MCF 10A (cell line): ENCODE measurements at regions of chr11 and their contacts with region 1.

Region 1: GRCh38 chr11:95790123-95790932 is at the start of gene CEP57:
- DNase-seq: peak; percentile 99
- H3K4me3 Mint-ChIP-seq: peak within 1 kb of the TSS; percentile 97
- H3K27ac Mint-ChIP-seq: peak within 1 kb of the TSS; percentile 100
- H3K4me1 Mint-ChIP-seq: peaks cover 17% of the 10 kb centered on the region
- H3K27me3 Mint-ChIP-seq: no peaks in the 10 kb centered on the region
- CTCF ChIP-seq: no peak
- total RNA-seq, gene CEP57: 73.7 and 78.8 TPM in 2 replicates

Region 2: DNA sequence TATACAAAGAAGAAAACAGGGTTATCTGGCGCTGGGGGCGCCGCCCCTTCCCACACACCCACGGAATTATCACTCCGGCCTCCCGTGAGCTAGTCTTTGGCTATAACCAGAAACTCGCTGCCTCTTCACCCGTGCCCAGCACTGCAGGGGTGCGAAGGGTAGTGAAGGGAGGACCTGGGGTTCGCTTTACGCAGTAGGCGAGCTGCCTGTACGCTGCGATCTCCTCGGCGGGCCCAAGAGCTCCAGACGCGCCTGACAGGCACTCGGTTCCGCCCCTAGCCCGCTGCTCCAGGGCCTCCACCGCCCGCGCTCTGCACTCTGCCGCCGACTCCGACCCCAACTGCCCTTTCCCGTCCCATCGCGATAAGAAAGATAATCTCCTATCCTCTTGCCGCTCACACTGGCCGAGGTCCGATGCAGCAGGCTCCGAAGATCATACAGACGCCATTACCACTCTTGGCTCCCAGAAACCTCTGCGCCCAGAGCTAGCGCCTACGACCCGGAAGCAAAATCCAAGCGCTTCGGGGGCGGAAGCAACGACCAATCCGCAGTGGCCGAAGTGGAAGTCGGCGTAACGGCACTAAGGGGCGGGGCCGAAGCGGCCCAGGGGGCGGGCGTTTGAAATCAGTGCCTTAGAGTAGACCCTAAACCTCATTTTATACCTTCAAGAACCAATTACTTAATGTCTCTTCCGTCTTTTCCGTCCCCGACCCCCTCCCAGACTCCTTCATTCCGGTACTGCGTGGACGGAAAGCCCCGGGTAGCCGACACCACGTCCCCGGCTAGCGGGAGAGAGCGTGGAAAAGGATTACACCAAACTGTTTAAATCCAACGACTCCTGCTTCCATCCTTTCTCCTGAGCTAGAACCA is 817.0 kb before region 1 on chr11 and contains the starts of genes CWC15 and KDM4D:
- CTCF ChIA-PET with region 1: no interaction called
- POLR2A ChIA-PET with region 1: interaction called, 11 read pairs
- intact Hi-C with region 1: no loop called
- DNase-seq: peak; percentile 94
- H3K4me3 Mint-ChIP-seq: peak within 1 kb of the TSS; percentile 86
- H3K27ac Mint-ChIP-seq: peak within 1 kb of the TSS; percentile 96
- H3K4me1 Mint-ChIP-seq: peaks cover 24% of the 10 kb centered on the region
- H3K27me3 Mint-ChIP-seq: no peaks in the 10 kb centered on the region
- CTCF ChIP-seq: no peak
- total RNA-seq, gene CWC15: 59.6 and 61.9 TPM in 2 replicates
- total RNA-seq, gene KDM4D: 1.1 and 1.3 TPM in 2 replicates

Region 3: DNA sequence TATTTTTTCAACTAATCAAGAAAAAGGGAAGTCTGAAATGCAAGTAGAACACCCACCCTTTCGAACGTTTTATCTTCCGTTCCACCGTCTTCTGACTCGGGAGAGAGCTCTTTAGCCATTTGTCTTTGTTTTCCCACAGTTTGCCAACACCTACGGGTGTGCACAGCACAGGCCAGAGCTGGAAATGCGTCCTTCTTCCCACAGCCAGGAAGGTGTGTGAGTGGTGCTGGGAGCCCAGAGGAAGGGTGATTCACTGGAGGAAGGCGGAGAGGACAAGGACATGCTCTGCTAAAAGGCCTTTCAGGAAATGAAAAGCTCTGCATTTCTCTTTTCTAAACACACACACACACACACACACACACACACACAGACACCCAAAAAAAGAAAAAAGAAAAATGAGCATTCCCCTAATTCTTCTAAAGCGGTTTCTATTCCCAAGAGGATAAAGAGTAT is 682.1 kb before region 1 on chr11:
- CTCF ChIA-PET with region 1: no interaction called
- POLR2A ChIA-PET with region 1: interaction called, 18 read pairs
- intact Hi-C with region 1: no loop called
- DNase-seq: peak; percentile 94
- H3K4me3 Mint-ChIP-seq: peak overlapping the region; percentile 75
- H3K27ac Mint-ChIP-seq: peak overlapping the region; percentile 98
- H3K4me1 Mint-ChIP-seq: peaks cover 38% of the 10 kb centered on the region
- H3K27me3 Mint-ChIP-seq: no peaks in the 10 kb centered on the region
- CTCF ChIP-seq: no peak

Region 4: GRCh38 chr11:95778699-95779098 is 11.6 kb before region 1 on chr11:
- CTCF ChIA-PET with region 1: interaction called, 3 read pairs
- POLR2A ChIA-PET with region 1: interaction called, 49 read pairs
- intact Hi-C with region 1: no loop called
- DNase-seq: no peak
- H3K4me3 Mint-ChIP-seq: no peak overlapping the region
- H3K27ac Mint-ChIP-seq: no peak overlapping the region
- H3K4me1 Mint-ChIP-seq: no peaks in the 10 kb centered on the region
- H3K27me3 Mint-ChIP-seq: no peaks in the 10 kb centered on the region
- CTCF ChIP-seq: no peak

Region 5: DNA sequence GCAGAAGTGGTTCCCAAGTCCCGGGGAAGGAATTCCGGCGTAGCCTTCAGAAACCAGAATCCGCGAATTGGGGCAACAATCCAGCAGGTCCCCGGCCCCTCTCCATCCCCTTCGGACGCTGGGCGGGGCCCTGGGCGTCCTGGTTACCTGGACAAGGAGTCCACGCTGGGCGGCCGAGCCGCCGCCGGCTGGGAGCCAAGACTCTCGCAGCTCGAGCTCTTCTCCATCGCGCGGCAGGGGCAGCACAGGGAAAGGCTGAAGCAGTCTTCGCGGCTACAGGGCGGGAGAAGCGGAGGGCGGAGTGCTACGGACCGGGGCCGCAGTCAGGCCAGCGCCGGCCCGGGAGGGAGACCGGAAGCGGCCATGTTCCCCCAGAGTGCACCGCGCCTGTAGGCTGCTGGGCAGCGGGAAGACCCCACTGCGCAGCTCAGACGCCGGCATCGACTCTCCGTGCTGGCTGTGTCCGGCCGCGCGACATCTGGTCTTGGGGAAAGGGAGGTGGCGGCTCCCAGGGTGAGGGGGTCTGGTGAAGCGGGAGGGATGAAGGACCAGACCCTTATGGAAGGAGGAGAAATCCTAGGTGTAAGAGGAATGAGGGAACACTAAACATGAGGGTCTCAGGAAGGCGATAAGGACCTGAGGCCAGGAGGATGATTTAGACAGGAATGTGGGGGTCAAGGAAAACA is 133.5 kb after region 1 on chr11 and contains the start of gene MTMR2:
- CTCF ChIA-PET with region 1: no interaction called
- POLR2A ChIA-PET with region 1: interaction called, 16 read pairs
- intact Hi-C with region 1: no loop called
- DNase-seq: peak; percentile 64
- H3K4me3 Mint-ChIP-seq: peak within 1 kb of the TSS; percentile 84
- H3K27ac Mint-ChIP-seq: peak within 1 kb of the TSS; percentile 95
- H3K4me1 Mint-ChIP-seq: peaks cover 21% of the 10 kb centered on the region
- H3K27me3 Mint-ChIP-seq: no peaks in the 10 kb centered on the region
- CTCF ChIP-seq: no peak
- total RNA-seq, gene MTMR2: 49.8 and 51.9 TPM in 2 replicates

Region 6: GRCh38 chr11:96424693-96425092 is 634.4 kb after region 1 on chr11:
- CTCF ChIA-PET with region 1: interaction called, 3 read pairs
- POLR2A ChIA-PET with region 1: interaction called, 4 read pairs
- intact Hi-C with region 1: loop called (anchors 1 kb)
- DNase-seq: peak; percentile 4
- H3K4me3 Mint-ChIP-seq: no peak overlapping the region
- H3K27ac Mint-ChIP-seq: no peak overlapping the region
- H3K4me1 Mint-ChIP-seq: no peaks in the 10 kb centered on the region
- H3K27me3 Mint-ChIP-seq: peaks cover 80% of the 10 kb centered on the region
- CTCF ChIP-seq: no peak